Dendritic cell treated with granulocyte-macrophage colony-stimulating factor and Interleukin-4, amounts not matched to agents 40 ng/mL and 50 ng/mL, for 4 days (primary cell): ENCODE measurements at regions of chr21 and their contacts with region 1.

Region 1: DNA sequence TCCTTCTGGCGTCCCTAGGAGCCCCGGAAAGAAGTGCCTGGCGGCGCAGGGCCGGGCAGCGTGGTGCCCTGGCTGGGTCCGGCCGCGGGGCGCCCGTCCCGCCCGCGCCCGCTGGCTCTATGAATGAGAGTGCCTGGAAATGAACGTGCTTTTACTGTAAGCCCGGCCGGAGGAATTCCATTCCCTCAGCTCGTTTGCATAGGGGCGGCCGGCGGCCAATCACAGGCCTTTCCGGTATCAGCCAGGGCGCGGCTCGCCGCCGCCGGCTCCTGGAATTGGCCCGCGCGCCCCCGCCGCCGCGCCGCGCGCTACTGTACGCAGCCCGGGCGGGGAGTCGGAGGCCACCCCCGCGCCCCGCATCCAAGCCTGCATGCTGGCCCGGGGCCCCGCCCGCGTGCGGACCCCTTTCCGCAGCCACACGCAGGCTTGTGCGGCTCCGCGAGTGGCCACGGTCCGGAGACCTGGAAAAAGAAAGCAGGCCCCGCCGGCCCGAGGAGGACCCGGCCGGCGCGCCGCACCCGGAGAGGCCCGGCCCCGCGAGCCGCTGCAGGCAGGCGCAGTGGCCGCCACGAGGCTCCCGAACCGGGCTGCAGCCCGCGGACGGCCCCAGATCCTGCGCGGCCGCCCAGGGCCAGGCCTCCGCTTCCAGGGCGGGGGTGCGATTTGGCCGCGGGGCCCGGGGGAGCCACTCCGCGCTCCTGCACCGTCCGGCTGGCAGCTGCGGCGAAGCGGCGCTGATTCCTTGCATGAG is 160.4 kb downstream of the RUNX1 start:
- H3K4me3 Mint-ChIP-seq: peak overlapping the region; percentile 95
- H3K27ac Mint-ChIP-seq: peak overlapping the region; percentile 97
- H3K4me1 Mint-ChIP-seq: peaks cover 10% of the 10 kb centered on the region
- H3K27me3 Mint-ChIP-seq: no peaks in the 10 kb centered on the region

Region 2: DNA sequence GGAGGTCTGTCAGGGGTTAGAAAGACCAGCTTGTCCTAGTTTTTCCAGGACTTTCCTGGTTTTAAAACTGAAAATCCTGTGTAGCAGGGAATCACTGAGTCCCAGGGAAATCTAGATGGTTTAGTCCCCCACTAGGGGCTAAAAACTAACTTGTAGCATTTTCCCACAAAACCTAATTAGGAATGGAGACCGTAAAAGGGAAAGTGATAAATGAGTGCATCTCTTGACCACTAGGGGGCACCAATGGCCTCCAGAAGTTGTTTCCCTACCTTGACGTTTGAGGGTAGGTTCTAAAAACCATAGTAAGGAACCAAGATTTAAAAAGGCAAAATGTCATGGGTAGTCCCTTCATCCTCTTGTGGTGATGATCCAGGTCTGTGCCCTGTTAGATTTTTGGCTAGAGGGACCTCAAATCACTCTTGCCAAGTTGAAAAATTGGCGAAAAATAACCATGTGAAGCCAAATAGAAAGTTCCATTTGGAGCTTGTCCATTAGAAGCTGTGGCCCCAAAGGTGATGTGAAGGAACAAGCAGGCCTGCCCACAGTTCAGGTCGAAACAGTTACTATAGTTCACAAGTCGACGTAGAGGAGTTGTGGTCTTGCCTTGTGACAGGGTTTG is 195.4 kb before region 1 on chr21:
- intact Hi-C with region 1: no loop called
- H3K4me3 Mint-ChIP-seq: no peak overlapping the region
- H3K27ac Mint-ChIP-seq: no peak overlapping the region
- H3K4me1 Mint-ChIP-seq: peaks cover 5% of the 10 kb centered on the region
- H3K27me3 Mint-ChIP-seq: peaks cover 16% of the 10 kb centered on the region

Region 3: DNA sequence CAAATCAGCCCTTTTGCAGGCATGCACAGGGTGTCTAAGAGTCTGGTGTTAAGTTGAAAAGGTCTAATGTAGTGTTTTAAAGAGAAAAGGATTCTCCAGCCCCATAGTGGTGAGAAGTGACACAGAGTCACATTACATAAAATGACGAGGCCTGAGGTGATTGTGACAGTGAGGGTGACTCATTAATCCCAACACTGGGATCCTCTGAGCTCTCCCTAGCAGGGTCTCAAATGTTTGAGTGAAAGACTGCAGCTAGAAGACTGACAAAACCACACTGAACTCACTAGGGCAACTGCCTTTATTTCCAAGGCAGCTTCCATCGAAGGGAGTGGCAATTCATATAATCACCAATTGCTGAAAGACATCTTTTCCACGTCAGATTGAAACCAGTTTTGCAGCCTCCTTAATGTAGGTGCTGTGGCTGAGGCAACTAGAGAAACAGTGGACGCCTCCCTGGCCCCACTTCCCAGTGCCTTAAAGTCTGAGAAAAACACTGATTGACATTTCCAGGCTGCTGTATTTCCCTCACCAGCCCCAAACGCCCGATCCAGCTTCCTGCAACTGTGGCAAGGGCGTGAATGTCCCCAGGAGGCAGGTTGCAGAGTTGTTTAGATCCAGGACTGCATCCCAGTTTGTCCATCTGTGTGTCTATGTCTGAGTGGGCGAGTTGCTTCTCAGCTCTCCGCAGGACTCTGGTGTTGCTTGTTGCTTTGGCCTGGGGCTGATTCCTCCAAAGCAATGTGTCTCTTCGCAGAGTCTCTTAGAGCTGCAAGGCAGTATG is 79.0 kb after region 1 on chr21:
- intact Hi-C with region 1: loop called (anchors 5 kb)
- H3K4me3 Mint-ChIP-seq: no peak overlapping the region
- H3K27ac Mint-ChIP-seq: peak overlapping the region; percentile 41
- H3K4me1 Mint-ChIP-seq: peaks cover 78% of the 10 kb centered on the region
- H3K27me3 Mint-ChIP-seq: no peaks in the 10 kb centered on the region

Region 4: GRCh38 chr21:35400233-35400957 is 511.7 kb after region 1 on chr21:
- intact Hi-C with region 1: loop called (anchors 5 kb)
- H3K4me3 Mint-ChIP-seq: peak overlapping the region; percentile 42
- H3K27ac Mint-ChIP-seq: peak overlapping the region; percentile 88
- H3K4me1 Mint-ChIP-seq: peaks cover 45% of the 10 kb centered on the region
- H3K27me3 Mint-ChIP-seq: no peaks in the 10 kb centered on the region

Region 5: GRCh38 chr21:35508139-35508888 is 619.6 kb after region 1 on chr21:
- intact Hi-C with region 1: loop called (anchors 2 kb)
- H3K4me3 Mint-ChIP-seq: no peak overlapping the region
- H3K27ac Mint-ChIP-seq: peak overlapping the region; percentile 78
- H3K4me1 Mint-ChIP-seq: peaks cover 65% of the 10 kb centered on the region
- H3K27me3 Mint-ChIP-seq: no peaks in the 10 kb centered on the region

Region 6: GRCh38 chr21:35940074-35940927 is 1051.6 kb after region 1 on chr21:
- intact Hi-C with region 1: loop called (anchors 5 kb)
- H3K4me3 Mint-ChIP-seq: no peak overlapping the region
- H3K27ac Mint-ChIP-seq: no peak overlapping the region
- H3K4me1 Mint-ChIP-seq: no peaks in the 10 kb centered on the region
- H3K27me3 Mint-ChIP-seq: no peaks in the 10 kb centered on the region